ENCODE measurements at regions of chr2 and their contacts with region 1.

Region 1: GRCh38 chr2:138787053-138787666 is 7.0 kb upstream of the NXPH2 start:
- DNase-seq: peak; percentile 51
- H3K4me3 Mint-ChIP-seq: no peak overlapping the region
- H3K27ac Mint-ChIP-seq: no peak overlapping the region
- H3K4me1 Mint-ChIP-seq: no peaks in the 10 kb centered on the region
- H3K27me3 Mint-ChIP-seq: peaks cover 42% of the 10 kb centered on the region
- CTCF ChIP-seq: peak; percentile 71

Region 2: DNA sequence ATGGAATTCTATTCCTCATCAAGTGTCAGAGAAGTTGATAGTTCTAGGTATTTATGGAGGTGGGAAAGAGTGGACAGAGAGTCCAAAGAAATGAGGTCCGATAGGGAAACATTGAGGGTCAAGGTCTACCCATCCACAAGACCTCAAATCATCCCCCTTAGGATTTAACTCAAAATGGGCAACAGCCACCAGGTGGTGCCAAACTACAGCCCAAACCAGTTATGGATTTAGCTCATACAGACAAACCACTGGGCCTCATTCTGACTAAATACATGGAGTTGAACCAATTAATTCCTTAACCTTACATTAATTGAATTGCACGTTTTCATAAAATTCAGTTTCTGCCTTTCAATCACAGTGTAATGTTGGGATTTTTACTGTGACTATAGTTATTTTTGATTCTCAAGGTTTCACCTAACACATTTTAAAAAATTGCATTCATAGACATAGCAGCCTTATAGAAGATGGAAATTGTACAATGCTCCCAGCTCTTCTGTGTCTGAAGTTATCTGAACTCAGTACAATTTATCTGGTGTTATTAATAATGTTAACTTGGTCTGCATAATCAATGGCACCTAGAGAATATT is 921.1 kb before region 1 on chr2:
- CTCF ChIA-PET with region 1: interaction called, 4 read pairs
- POLR2A ChIA-PET with region 1: no interaction called
- intact Hi-C with region 1: loop called (anchors 1 kb)
- DNase-seq: peak; percentile 66
- H3K4me3 Mint-ChIP-seq: no peak overlapping the region
- H3K27ac Mint-ChIP-seq: no peak overlapping the region
- H3K4me1 Mint-ChIP-seq: no peaks in the 10 kb centered on the region
- H3K27me3 Mint-ChIP-seq: peaks cover 21% of the 10 kb centered on the region
- CTCF ChIP-seq: peak; percentile 70

Region 3: GRCh38 chr2:137910641-137911040 is 876.5 kb before region 1 on chr2:
- CTCF ChIA-PET with region 1: interaction called, 96 read pairs
- POLR2A ChIA-PET with region 1: interaction called, 6 read pairs
- intact Hi-C with region 1: loop called (anchors 1 kb)
- DNase-seq: peak; percentile 19
- H3K4me3 Mint-ChIP-seq: no peak overlapping the region
- H3K27ac Mint-ChIP-seq: no peak overlapping the region
- H3K4me1 Mint-ChIP-seq: no peaks in the 10 kb centered on the region
- H3K27me3 Mint-ChIP-seq: no peaks in the 10 kb centered on the region
- CTCF ChIP-seq: peak; percentile 63

Region 4: GRCh38 chr2:138090330-138090729 is 696.8 kb before region 1 on chr2:
- CTCF ChIA-PET with region 1: interaction called, 16 read pairs
- POLR2A ChIA-PET with region 1: interaction called, 3 read pairs
- intact Hi-C with region 1: loop called (anchors 1 kb)
- DNase-seq: peak; percentile 71
- H3K4me3 Mint-ChIP-seq: no peak overlapping the region
- H3K27ac Mint-ChIP-seq: no peak overlapping the region
- H3K4me1 Mint-ChIP-seq: peaks cover 27% of the 10 kb centered on the region
- H3K27me3 Mint-ChIP-seq: no peaks in the 10 kb centered on the region
- CTCF ChIP-seq: peak; percentile 47

Region 5: GRCh38 chr2:138501425-138502283 is 285.5 kb before region 1 on chr2 and contains the start of gene SPOPL:
- CTCF ChIA-PET with region 1: interaction called, 17 read pairs
- POLR2A ChIA-PET with region 1: interaction called, 4 read pairs
- intact Hi-C with region 1: loop called (anchors 5 kb)
- DNase-seq: peak; percentile 85
- H3K4me3 Mint-ChIP-seq: peak within 1 kb of the TSS; percentile 94
- H3K27ac Mint-ChIP-seq: peak within 1 kb of the TSS; percentile 93
- H3K4me1 Mint-ChIP-seq: peaks cover 16% of the 10 kb centered on the region
- H3K27me3 Mint-ChIP-seq: no peaks in the 10 kb centered on the region
- CTCF ChIP-seq: peak; percentile 26
- total RNA-seq, gene SPOPL: 15.8 and 17.7 TPM in 2 replicates

Region 6: DNA sequence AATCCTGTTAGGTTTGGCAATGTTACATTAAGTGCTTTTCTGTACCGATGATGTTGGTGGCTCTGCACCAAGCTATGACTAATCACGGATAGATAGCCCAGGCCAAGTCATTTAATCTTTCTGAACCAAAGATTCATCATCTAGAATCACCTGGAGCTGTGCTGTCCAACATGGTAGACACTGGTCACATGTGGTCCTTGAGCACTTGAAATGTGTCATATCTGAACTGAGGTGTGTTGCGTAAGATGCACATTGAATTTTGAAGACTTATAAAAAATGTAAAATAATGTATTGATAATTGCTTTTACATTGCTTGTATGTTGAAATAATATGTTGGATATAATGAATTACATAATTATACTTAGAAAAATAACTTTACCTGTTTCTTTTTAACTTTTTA is 32.8 kb after region 1 on chr2:
- CTCF ChIA-PET with region 1: interaction called, 11 read pairs
- POLR2A ChIA-PET with region 1: no interaction called
- intact Hi-C with region 1: no loop called
- DNase-seq: no peak
- H3K4me3 Mint-ChIP-seq: no peak overlapping the region
- H3K27ac Mint-ChIP-seq: no peak overlapping the region
- H3K4me1 Mint-ChIP-seq: no peaks in the 10 kb centered on the region
- H3K27me3 Mint-ChIP-seq: peaks cover 16% of the 10 kb centered on the region
- CTCF ChIP-seq: no peak

Measured in MCF 10A (cell line).